Stomach (tissue), 19 donors: ENCODE measurements at regions of chr20 and their contacts with region 1.

Region 1: DNA sequence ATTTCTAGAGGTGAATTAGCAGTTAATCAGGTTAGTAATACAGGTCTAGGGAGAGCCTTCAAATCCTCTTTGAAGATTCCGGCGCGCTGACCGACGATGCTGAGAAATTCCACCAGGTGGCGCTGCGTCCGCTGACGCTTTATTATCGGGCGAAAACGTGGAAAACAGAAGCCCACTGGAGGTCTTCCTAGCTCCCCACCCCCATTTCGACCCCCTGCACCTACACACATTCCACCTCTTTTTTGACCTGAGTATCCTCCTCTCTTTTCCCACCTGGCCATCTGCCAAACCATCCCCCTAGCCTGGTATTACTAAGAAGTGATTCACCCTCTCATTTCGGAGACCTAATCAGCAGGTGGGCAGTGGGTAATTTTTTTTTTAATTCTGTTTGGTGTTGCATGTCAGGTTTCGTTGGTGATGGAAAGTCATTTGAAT is 65.4 kb upstream of the RIN2 start:
- DNase-seq: peak; percentile 71 to 76
- H3K4me3 ChIP-seq: no peak overlapping the region
- H3K27ac ChIP-seq: no peak overlapping the region
- H3K4me1 ChIP-seq: peaks cover 0 to 13% (median 0%) of the 10 kb centered on the region in 4 donors
- H3K27me3 ChIP-seq: no peaks in the 10 kb centered on the region
- CTCF ChIP-seq: peak in 5 of 7 experiments; percentile 77 to 98 (median 90)
- EP300 ChIP-seq: no peak
- POLR2A ChIP-seq: no peak

Region 2: GRCh38 chr20:19775360-19776253 is 82.9 kb after region 1 on chr20:
- intact Hi-C with region 1: loop called (anchors 10 kb)
- DNase-seq: peak; percentile 33 to 74
- H3K4me3 ChIP-seq: no peak overlapping the region
- H3K27ac ChIP-seq: peak overlapping the region in 3 of 5 donors; percentile 9 to 47 (median 25)
- H3K4me1 ChIP-seq: peaks cover 0 to 49% (median 22%) of the 10 kb centered on the region in 4 donors
- H3K27me3 ChIP-seq: no peaks in the 10 kb centered on the region
- CTCF ChIP-seq: no peak
- EP300 ChIP-seq: no peak
- POLR2A ChIP-seq: no peak